ENCODE measurements at regions of chr2 and their contacts with region 1.

Region 1: GRCh38 chr2:26235085-26235484 is 9.3 kb downstream of the HADHA start:
- DNase-seq: no peak
- ATAC-seq: no peak

Region 2: DNA sequence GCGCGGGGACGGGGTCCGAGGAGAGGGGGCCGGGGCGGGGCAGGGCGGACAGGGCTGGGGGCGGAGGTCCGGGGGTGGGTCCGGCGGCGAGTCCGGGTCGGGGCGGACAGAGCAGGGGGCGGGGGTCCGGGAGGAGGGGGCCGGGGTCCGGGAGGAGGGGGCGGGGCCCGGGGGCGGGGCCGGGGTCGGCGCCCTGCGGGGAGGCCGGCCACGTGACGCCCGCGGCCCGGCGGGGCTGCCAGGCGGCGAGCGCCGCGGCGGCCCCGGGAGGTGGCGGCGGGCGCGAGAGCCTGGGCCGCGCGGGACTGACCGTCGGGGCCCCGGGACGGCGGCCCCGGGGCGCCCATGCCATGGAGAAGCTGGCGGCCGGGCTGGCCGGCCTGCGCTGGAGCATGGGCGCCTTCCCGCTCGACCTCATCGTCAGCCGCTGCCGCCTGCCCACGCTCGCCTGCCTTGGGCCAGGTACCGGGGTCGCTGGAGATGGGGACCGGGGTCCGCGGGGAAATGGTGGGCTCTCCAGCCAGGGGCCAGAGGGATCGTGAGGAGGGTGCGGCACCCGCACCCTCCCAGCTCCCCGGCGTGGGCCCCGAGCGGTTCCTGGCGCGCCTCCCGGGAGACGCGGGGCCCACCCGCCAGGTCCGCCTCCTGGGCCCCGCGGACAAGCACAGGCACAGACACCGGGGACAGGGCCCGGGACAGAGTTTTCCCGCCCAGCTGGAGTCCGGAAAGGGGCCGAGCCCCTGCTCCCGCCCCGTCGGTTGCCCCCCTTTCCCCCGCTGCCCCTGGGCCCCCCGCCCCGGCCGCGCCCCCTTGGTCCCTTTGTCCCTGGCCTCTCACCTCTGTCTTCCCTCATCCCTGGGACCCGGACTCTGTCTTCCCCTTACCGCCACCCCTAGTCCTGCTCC is 62.0 kb before region 1 on chr2 and contains the start of gene GAREM2:
- intact Hi-C with region 1: no loop called
- DNase-seq: no peak
- ATAC-seq: peak; percentile 23
- total RNA-seq, gene GAREM2: 1.3 TPM

Region 3: GRCh38 chr2:26279886-26280285 is 44.8 kb after region 1 on chr2:
- intact Hi-C with region 1: loop called (anchors 5 kb)
- DNase-seq: no peak
- ATAC-seq: no peak

Region 4: GRCh38 chr2:26327291-26328272 is 92.5 kb after region 1 on chr2:
- intact Hi-C with region 1: loop called (anchors 5 kb)
- DNase-seq: no peak
- ATAC-seq: no peak

Region 5: GRCh38 chr2:26382564-26382963 is 147.5 kb after region 1 on chr2:
- intact Hi-C with region 1: no loop called
- DNase-seq: no peak
- ATAC-seq: no peak